ENCODE measurements at regions of chr10 and their contacts with region 1.

Region 1: DNA sequence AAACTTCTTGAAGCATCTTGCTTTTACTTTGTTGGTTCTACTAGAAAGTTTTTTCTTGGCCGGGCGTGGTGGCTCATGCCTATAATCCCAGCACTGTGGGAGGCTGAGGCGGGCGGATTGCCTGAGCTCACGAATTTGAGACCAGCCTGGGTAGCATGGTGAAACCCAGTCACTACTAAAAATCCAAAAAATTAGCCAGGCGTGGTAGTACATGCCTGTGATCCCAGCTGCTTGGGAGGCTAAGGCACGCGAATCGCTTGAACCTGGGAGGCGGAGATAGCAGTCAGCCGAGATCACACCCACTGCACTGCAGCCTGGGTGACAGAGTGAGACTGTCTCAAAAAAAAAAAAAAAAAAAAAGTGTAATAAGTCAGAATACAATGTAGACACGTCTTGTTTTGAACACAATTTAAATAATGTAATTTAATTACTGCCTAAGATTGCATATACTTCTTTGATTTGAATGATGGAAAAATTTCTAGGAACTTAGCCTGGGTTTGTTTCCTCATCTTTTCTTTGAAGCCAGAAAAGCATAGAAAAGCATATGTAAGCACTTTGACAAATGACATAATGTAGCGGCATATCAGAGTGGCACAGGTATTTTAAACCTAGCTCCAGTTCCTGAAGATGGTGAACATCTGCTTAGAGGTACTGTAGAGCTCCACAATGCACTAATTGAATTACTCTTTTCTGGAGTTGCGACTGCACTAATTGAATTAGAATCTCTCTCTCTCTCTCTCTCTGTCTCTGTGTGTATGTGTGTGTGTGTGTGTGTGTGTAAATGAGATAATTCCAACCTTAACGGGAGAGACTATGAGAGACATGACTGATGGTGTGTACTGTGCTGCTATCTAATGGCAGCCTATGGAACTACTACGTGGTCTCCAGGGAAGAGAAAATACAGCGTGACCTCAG is 87.8 kb downstream of the BTRC start:
- DNase-seq: no peak
- H3K4me3 Mint-ChIP-seq: no peak overlapping the region
- H3K27ac Mint-ChIP-seq: no peak overlapping the region
- H3K4me1 Mint-ChIP-seq: peaks cover 1% of the 10 kb centered on the region
- H3K27me3 Mint-ChIP-seq: peaks cover 8% of the 10 kb centered on the region

Region 2: DNA sequence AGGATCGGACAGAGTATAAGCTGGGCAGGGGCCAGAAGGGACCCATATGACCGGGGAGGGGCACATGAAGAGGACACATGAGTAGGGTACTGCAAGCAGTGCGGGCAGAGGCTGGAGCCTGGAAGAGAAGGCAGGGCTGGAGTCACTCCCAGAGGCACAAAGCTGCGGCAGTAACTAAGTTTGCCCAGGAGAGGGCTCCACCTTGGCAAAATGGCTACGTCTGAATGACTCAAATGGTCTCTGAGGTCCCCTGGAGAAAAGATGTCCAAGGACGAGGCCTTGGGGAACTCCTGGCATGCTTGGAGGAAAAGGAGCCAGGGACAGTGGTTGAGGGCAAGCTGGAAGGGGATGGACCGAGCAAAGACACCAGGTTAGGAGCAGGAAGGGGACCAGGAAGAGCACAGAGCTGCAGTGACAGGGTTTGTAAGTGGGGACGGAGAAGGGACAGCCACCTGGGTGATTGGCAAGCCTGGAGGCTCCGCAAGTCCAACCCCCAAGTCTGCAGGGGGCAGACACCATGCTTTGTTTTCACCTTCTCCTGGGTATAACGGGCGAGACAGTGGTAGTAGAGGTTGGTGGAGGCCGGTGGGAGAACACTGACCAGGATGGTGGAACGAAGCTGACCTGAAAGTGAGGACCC is 169.4 kb before region 1 on chr10:
- intact Hi-C with region 1: loop called (anchors 2 kb)
- DNase-seq: peak; percentile 32
- H3K4me3 Mint-ChIP-seq: no peak overlapping the region
- H3K27ac Mint-ChIP-seq: no peak overlapping the region
- H3K4me1 Mint-ChIP-seq: peaks cover 1% of the 10 kb centered on the region
- H3K27me3 Mint-ChIP-seq: peaks cover 26% of the 10 kb centered on the region

Region 3: DNA sequence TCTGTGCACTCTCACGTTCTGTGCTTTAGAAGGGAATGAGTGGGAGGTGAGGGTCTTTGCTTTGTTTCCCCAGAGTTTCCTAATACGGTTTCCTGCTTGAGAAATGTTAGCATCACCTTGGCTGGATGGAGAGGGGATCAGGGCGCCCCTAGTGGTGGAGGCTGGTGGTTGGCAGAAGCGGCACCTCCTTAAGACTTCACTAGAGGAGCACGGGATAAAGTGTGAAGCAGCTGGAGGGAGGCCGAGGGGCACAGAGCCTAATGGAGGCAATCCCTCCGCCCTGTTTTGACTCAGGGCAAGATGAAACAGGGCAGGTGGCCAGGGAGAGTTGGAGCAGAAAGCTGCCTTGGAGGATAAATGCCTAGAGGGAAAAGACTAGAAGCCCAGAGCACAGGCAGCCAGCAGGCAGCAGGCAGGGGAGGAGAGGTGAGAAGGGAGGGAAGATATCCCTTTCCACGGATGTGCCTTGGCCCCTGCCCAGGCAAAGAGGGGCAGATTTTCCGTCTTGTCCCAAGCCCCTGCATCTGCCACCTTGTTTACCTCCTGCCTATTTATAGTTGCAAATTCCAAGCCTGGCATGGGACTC is 143.8 kb before region 1 on chr10:
- intact Hi-C with region 1: loop called (anchors 2 kb)
- DNase-seq: peak; percentile 58
- H3K4me3 Mint-ChIP-seq: no peak overlapping the region
- H3K27ac Mint-ChIP-seq: no peak overlapping the region
- H3K4me1 Mint-ChIP-seq: no peaks in the 10 kb centered on the region
- H3K27me3 Mint-ChIP-seq: peaks cover 44% of the 10 kb centered on the region

Region 4: GRCh38 chr10:101759309-101760247 is 317.8 kb after region 1 on chr10:
- intact Hi-C with region 1: no loop called
- DNase-seq: no peak
- H3K4me3 Mint-ChIP-seq: no peak overlapping the region
- H3K27ac Mint-ChIP-seq: no peak overlapping the region
- H3K4me1 Mint-ChIP-seq: no peaks in the 10 kb centered on the region
- H3K27me3 Mint-ChIP-seq: peaks cover 18% of the 10 kb centered on the region

Region 5: GRCh38 chr10:101830322-101831168 is 388.7 kb after region 1 on chr10:
- intact Hi-C with region 1: no loop called
- DNase-seq: peak; percentile 88
- H3K4me3 Mint-ChIP-seq: peak overlapping the region; percentile 71
- H3K27ac Mint-ChIP-seq: peak overlapping the region; percentile 92
- H3K4me1 Mint-ChIP-seq: peaks cover 48% of the 10 kb centered on the region
- H3K27me3 Mint-ChIP-seq: no peaks in the 10 kb centered on the region